ENCODE measurements at regions of chr17 and their contacts with region 1.

Region 1: DNA sequence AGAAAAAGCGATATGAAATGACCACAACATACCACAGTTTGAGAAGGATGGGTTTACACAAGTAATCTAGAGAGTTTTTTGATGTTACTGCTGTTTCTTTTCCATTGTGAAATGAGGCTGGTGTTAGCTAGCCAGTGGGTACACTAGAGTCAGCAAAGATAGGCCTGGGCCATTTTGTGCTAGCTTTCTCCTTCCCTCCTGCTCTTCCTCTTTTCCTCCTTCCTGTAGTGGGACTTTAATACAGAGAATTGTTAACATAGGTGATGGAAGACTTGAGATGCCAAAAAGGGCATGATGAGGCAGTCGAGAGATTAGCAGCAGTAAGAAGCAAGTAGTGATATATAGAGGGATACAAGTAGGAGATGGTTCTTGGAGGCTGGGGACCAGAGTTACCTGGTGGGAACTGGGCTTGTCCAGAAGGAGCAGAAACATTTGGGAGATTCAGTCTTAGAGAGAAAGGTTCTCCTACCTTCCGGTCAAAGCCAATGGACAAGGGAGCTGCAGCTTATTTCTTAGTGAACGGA is 7.7 kb downstream of the NSRP1 start:
- DNase-seq: no peak
- ATAC-seq: no peak
- H3K4me3 ChIP-seq: no peak overlapping the region
- H3K27ac ChIP-seq: no peak overlapping the region
- H3K4me1 ChIP-seq: peaks cover 7% of the 10 kb centered on the region; the same call in 1 of the 2 replicates
- H3K27me3 ChIP-seq: no peaks in the 10 kb centered on the region
- CTCF ChIP-seq: no peak
- EP300 ChIP-seq: no peak
- POLR2A ChIP-seq: no peak
- RAD21 ChIP-seq: no peak

Region 2: GRCh38 chr17:30062372-30062771 is 62.0 kb before region 1 on chr17:
- CTCF ChIA-PET with region 1: no interaction called
- POLR2A ChIA-PET with region 1: no interaction called
- RAD21 ChIA-PET with region 1: no interaction called
- SMC1A ChIA-PET with region 1: no interaction called
- in situ Hi-C with region 1: no loop called
- intact Hi-C with region 1: no loop called
- DNase-seq: no peak
- ATAC-seq: no peak
- H3K4me3 ChIP-seq: no peak overlapping the region
- H3K27ac ChIP-seq: no peak overlapping the region
- H3K4me1 ChIP-seq: no peaks in the 10 kb centered on the region
- H3K27me3 ChIP-seq: no peaks in the 10 kb centered on the region; a peak in 1 of 4 replicates
- CTCF ChIP-seq: no peak
- EP300 ChIP-seq: no peak
- POLR2A ChIP-seq: no peak
- RAD21 ChIP-seq: no peak

Region 3: DNA sequence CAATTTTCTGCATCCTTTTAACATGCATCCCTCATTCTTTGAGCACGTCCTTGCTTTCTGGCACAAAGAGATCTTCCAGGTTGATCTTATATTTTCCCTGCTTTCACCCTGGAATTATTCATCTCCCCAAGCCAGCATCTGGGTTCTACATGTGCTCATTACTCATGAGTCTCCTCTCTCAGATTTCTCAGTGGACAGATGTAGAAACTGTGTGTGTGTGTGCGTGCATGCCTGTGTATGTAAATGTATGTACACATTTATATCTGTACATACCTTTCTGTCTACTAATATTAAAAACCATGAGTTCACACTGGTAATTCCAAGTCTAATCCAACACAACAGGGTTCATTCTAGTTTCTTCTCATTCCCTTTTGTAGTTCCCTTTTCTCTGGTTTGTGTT is 49.6 kb before region 1 on chr17:
- CTCF ChIA-PET with region 1: no interaction called
- POLR2A ChIA-PET with region 1: no interaction called
- RAD21 ChIA-PET with region 1: no interaction called
- SMC1A ChIA-PET with region 1: no interaction called
- in situ Hi-C with region 1: no loop called
- intact Hi-C with region 1: no loop called
- DNase-seq: no peak
- ATAC-seq: no peak
- H3K4me3 ChIP-seq: no peak overlapping the region
- H3K27ac ChIP-seq: no peak overlapping the region
- H3K4me1 ChIP-seq: no peaks in the 10 kb centered on the region
- H3K27me3 ChIP-seq: peaks cover 0 to 5% of the 10 kb centered on the region in 2 experiments; a peak in 1 of 4 replicates
- CTCF ChIP-seq: no peak
- EP300 ChIP-seq: no peak
- POLR2A ChIP-seq: no peak
- RAD21 ChIP-seq: no peak

Region 4: GRCh38 chr17:30104575-30105339 is 19.6 kb before region 1 on chr17:
- CTCF ChIA-PET with region 1: interaction called, 140 read pairs
- POLR2A ChIA-PET with region 1: interaction called, 4 read pairs
- RAD21 ChIA-PET with region 1: interaction called, 66 read pairs
- SMC1A ChIA-PET with region 1: interaction called, 58 read pairs
- in situ Hi-C with region 1: no loop called
- intact Hi-C with region 1: no loop called
- DNase-seq: peak; percentile 46
- ATAC-seq: peak; percentile 100
- H3K4me3 ChIP-seq: peak overlapping the region; percentile 60; the same call in 1 of the 2 replicates
- H3K27ac ChIP-seq: no peak overlapping the region
- H3K4me1 ChIP-seq: 0 out of 2 replicates have a peak, but pooled peaks cover 3% of the 10 kb centered on the region
- H3K27me3 ChIP-seq: no peaks in the 10 kb centered on the region
- CTCF ChIP-seq: peak; percentile 87 to 90 (median 88); a peak in 5 of 6 replicates
- EP300 ChIP-seq: no peak
- POLR2A ChIP-seq: no peak
- RAD21 ChIP-seq: peak; percentile 88

Region 5: GRCh38 chr17:30161601-30162000 is 37.3 kb after region 1 on chr17:
- CTCF ChIA-PET with region 1: interaction called, 31 read pairs
- POLR2A ChIA-PET with region 1: no interaction called
- RAD21 ChIA-PET with region 1: interaction called, 6 read pairs
- SMC1A ChIA-PET with region 1: interaction called, 18 read pairs
- in situ Hi-C with region 1: no loop called
- intact Hi-C with region 1: no loop called
- DNase-seq: no peak
- ATAC-seq: no peak
- H3K4me3 ChIP-seq: no peak overlapping the region
- H3K27ac ChIP-seq: no peak overlapping the region
- H3K4me1 ChIP-seq: no peaks in the 10 kb centered on the region; the same call in 1 of the 2 replicates
- H3K27me3 ChIP-seq: no peaks in the 10 kb centered on the region
- CTCF ChIP-seq: no peak
- EP300 ChIP-seq: no peak
- POLR2A ChIP-seq: no peak
- RAD21 ChIP-seq: no peak

Region 6: GRCh38 chr17:30203471-30203981 is 79.2 kb after region 1 on chr17:
- CTCF ChIA-PET with region 1: interaction called, 33 read pairs
- POLR2A ChIA-PET with region 1: interaction called, 3 read pairs
- RAD21 ChIA-PET with region 1: interaction called, 22 read pairs
- SMC1A ChIA-PET with region 1: interaction called, 25 read pairs
- in situ Hi-C with region 1: no loop called
- intact Hi-C with region 1: no loop called
- DNase-seq: no peak
- ATAC-seq: peak; percentile 87
- H3K4me3 ChIP-seq: no peak overlapping the region
- H3K27ac ChIP-seq: no peak overlapping the region
- H3K4me1 ChIP-seq: peaks cover 16% of the 10 kb centered on the region
- H3K27me3 ChIP-seq: no peaks in the 10 kb centered on the region
- CTCF ChIP-seq: peak; percentile 33 to 41 (median 40); a peak in 5 of 6 replicates
- EP300 ChIP-seq: no peak
- POLR2A ChIP-seq: no peak
- RAD21 ChIP-seq: peak; percentile 40; the same call in 1 of the 2 replicates

Region 7: GRCh38 chr17:30236766-30237165 is 112.4 kb after region 1 on chr17:
- CTCF ChIA-PET with region 1: interaction called, 97 read pairs
- POLR2A ChIA-PET with region 1: interaction called, 4 read pairs
- RAD21 ChIA-PET with region 1: interaction called, 52 read pairs
- SMC1A ChIA-PET with region 1: interaction called, 69 read pairs
- in situ Hi-C with region 1: loop called (anchors 5 kb)
- intact Hi-C with region 1: loop called (anchors 1 kb)
- DNase-seq: no peak
- ATAC-seq: peak; percentile 75
- H3K4me3 ChIP-seq: no peak overlapping the region
- H3K27ac ChIP-seq: no peak overlapping the region
- H3K4me1 ChIP-seq: peaks cover 29% of the 10 kb centered on the region
- H3K27me3 ChIP-seq: no peaks in the 10 kb centered on the region
- CTCF ChIP-seq: peak; percentile 38 to 70 (median 65)
- EP300 ChIP-seq: no peak
- POLR2A ChIP-seq: no peak
- RAD21 ChIP-seq: peak; percentile 80

Region 8: DNA sequence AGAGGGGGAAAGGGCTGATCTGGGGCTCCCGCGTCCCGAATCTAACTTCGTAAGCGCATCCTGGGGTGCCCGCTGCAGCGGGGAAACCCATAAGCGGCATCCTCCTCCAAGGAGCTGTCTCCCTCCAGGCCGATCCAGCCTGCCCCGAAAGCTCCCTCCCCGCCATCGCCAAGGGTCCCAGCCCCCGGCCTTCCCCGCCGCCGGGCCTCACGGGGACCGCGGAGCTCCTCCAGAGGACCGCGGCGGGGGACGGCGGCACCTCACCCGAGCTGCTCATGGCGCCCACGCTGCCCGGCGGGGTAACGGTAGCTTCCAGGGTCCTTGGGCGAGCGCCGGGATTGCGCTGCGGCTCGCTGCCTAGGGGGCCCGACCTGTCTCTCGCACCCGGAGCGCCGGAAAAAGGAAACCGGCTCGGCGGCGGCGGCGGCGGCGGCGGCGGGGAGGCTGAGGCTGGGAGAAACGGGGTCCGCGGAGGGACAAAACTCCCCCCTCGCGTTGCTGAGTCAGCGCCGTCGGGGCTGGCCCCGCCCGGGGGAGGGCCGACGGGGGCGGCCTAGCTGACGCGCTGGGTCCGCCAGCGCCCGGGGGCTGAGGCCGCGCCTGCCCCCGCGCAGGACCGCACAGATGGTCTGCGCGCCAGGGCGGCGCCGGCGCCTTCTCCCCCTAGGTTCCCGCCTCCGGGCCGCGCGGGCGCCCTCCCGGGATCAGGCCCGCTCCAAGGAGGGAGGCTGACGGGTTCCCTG is 167.4 kb after region 1 on chr17 and contains the start of gene BLMH:
- CTCF ChIA-PET with region 1: interaction called, 21 read pairs
- POLR2A ChIA-PET with region 1: no interaction called
- RAD21 ChIA-PET with region 1: no interaction called
- SMC1A ChIA-PET with region 1: interaction called, 6 read pairs
- in situ Hi-C with region 1: no loop called
- intact Hi-C with region 1: no loop called
- DNase-seq: no peak
- ATAC-seq: peak; percentile 94
- H3K4me3 ChIP-seq: peak within 1 kb of the TSS; percentile 92
- H3K27ac ChIP-seq: peak within 1 kb of the TSS; percentile 59
- H3K4me1 ChIP-seq: no peaks in the 10 kb centered on the region
- H3K27me3 ChIP-seq: no peaks in the 10 kb centered on the region
- CTCF ChIP-seq: no peak
- EP300 ChIP-seq: no peak
- POLR2A ChIP-seq: peak; percentile 84
- RAD21 ChIP-seq: no peak
- polyA plus RNA-seq, gene BLMH: 16.1 to 34.2 TPM

Region 9: GRCh38 chr17:30344283-30345088 is 220.2 kb after region 1 on chr17:
- CTCF ChIA-PET with region 1: interaction called, 204 read pairs
- POLR2A ChIA-PET with region 1: no interaction called
- RAD21 ChIA-PET with region 1: interaction called, 27 read pairs
- SMC1A ChIA-PET with region 1: interaction called, 125 read pairs
- in situ Hi-C with region 1: no loop called
- intact Hi-C with region 1: loop called (anchors 5 kb)
- DNase-seq: no peak
- ATAC-seq: no peak
- H3K4me3 ChIP-seq: no peak overlapping the region
- H3K27ac ChIP-seq: no peak overlapping the region
- H3K4me1 ChIP-seq: peaks cover 8% of the 10 kb centered on the region
- H3K27me3 ChIP-seq: no peaks in the 10 kb centered on the region
- CTCF ChIP-seq: no peak
- EP300 ChIP-seq: no peak
- POLR2A ChIP-seq: no peak
- RAD21 ChIP-seq: no peak

Measured in GM12878 (cell line).